ENCODE measurements at regions of chr3 and their contacts with region 1.

Region 1: DNA sequence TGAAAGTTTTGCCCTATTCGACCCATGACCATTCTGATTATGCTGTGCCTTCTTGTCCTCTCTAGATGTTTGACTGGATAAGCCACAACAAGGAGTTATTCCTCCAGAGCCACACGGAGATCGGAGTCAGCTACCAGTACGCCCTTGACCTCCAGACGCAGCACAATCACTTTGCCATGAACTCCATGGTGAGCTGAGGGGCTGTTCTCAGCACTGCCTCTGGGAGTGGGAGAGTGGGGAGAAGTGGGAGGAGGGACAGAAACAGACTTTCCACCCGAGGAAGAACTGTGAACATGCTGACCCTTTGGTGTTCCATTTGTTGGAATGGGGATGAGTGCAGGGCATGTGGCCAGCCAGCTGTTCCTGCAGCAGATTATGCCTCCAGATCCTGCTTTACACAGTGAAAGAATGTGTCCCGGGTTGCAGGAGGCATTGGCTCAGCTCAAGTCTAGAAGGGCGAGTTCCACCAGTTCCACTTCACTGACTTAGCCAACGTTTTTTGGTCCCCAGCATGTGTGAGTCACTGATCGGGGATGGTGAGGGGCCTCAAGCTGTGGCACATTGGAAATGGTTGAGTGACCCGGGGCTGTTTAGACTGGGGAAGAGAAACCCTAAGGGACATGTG is 306.9 kb upstream of the ROPN1 start:
- DNase-seq: no peak
- ATAC-seq: no peak
- H3K4me3 ChIP-seq: no peak overlapping the region
- H3K27ac ChIP-seq: no peak overlapping the region
- H3K4me1 ChIP-seq: peaks cover 2% of the 10 kb centered on the region; the same call in 1 of the 2 replicates
- H3K27me3 ChIP-seq: peaks cover 16% of the 10 kb centered on the region
- CTCF ChIP-seq: no peak
- POLR2A ChIP-seq: no peak
- RAD21 ChIP-seq: no peak

Region 2: DNA sequence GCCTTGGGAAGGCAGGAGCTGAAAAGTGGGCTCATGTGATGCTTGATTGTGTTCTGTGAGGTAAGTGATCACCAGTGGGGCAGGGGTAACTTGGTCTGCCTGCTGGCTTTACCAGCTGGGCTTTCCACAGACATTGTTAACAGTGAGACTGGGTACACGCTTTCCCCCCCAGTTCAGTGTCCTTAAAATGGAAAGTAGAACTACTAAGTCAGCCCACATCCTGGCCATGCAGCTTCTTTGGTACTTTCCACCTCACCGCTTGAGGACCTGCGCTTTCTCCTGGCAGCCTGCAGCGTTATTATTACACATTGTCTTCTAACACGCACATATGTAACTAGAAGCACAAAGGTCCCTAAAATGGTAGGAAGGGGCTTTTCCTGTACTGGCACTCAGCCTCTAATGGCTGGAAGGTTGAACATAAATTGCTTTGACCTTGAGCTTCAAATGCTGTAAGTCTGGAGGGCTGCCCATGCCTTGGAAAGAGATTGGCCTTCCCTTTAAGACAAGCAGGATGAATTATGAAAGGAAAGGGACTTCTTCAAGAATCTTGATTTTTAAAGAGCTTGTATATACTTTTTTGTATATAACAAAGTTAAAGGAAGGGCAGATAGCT is 90.9 kb before region 1 on chr3:
- CTCF ChIA-PET with region 1: no interaction called
- POLR2A ChIA-PET with region 1: no interaction called
- dilution Hi-C with region 1: no loop called
- in situ Hi-C with region 1: no loop called
- intact Hi-C with region 1: loop called (anchors 5 kb)
- DNase-seq: no peak
- ATAC-seq: no peak
- H3K4me3 ChIP-seq: no peak overlapping the region
- H3K27ac ChIP-seq: no peak overlapping the region
- H3K4me1 ChIP-seq: no peaks in the 10 kb centered on the region
- H3K27me3 ChIP-seq: peaks cover 11% of the 10 kb centered on the region; the same call in 1 of the 2 replicates
- CTCF ChIP-seq: no peak
- POLR2A ChIP-seq: no peak
- RAD21 ChIP-seq: no peak